ENCODE measurements at regions of chr1 and their contacts with region 1.

Region 1: DNA sequence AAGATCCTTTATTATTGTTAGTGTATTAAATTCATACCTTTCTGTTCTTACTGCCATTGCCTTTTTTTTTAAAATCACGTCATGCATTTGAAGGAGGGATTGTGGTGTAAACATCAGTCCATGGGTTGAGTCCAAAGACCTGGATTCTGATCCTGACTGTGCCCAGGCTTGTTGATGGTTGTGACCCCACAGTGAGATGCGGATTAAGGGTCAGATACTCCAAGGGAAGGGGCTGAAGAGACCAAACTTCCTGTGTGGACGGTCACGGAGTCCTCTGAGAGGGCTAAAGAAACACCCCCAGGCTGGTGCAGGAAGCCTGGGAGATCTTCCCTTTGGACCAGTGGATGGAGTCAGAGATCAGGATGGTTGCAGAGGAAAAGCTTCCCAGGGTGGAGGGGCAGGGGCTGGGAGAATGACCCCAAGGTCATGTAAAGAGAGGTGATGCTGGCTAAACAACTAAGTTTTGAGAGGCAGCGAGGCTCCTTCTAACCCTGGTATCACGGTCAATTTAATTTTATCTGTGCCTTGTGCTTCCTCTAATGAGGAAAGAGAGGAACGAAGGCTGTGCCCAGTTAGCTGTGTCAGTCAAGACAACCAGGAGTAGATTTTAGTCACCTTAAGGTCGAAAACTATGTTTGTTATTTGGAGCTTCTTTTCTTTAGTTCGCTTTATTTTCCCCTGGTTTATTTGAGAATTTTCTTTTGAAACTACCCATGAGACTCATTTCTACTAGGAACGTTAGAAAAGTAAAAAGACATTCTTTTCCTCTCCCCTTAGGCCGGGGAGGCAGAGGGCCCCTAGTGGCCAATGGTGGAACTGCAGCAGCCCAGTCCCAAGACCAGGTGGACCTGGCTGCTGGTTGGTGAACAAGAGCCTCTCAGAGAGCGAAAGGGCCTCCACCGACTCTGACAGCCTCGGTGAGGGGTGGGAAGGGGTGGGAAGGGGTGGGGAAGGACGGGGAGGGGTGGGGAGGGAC is 8.7 kb upstream of the GPR161 start:
- DNase-seq: peak; percentile 72 to 89 (median 81)
- ATAC-seq: peak; percentile 99
- H3K4me3 ChIP-seq: no peak overlapping the region
- H3K4me3 Mint-ChIP-seq: peak overlapping the region; percentile 42
- H3K27ac ChIP-seq: no peak overlapping the region
- H3K27ac Mint-ChIP-seq: no peak overlapping the region
- H3K4me1 ChIP-seq: no peaks in the 10 kb centered on the region
- H3K4me1 Mint-ChIP-seq: peaks cover 12% of the 10 kb centered on the region
- H3K27me3 ChIP-seq: no peaks in the 10 kb centered on the region
- H3K27me3 Mint-ChIP-seq: no peaks in the 10 kb centered on the region
- CTCF ChIP-seq: peak; percentile 91

Region 2: DNA sequence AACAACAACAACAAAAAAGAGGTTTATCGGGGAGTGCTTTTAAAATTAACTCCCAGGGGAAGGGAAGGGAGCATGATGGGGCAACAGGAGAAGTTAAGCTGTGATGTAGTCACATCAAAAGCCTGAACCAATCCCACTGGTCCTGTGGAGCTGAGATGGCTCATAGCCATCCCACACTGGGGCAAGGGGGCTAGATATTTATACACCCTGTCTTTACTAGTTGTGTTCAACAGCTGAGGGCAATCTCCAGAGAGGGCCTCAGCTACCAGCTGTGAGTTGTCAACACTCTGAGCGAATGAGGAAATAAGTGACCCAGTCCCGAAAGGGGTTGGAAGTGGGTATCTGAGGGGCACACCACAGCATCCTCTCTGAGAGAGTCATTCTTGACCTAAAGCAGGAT is 560.9 kb before region 1 on chr1:
- CTCF ChIA-PET with region 1: no interaction called
- POLR2A ChIA-PET with region 1: no interaction called
- intact Hi-C with region 1: no loop called
- DNase-seq: no peak
- ATAC-seq: no peak
- H3K4me3 ChIP-seq: no peak overlapping the region
- H3K4me3 Mint-ChIP-seq: no peak overlapping the region
- H3K27ac ChIP-seq: no peak overlapping the region
- H3K27ac Mint-ChIP-seq: no peak overlapping the region
- H3K4me1 ChIP-seq: no peaks in the 10 kb centered on the region
- H3K4me1 Mint-ChIP-seq: no peaks in the 10 kb centered on the region
- H3K27me3 ChIP-seq: no peaks in the 10 kb centered on the region
- H3K27me3 Mint-ChIP-seq: peaks cover 3% of the 10 kb centered on the region
- CTCF ChIP-seq: no peak

Region 3: DNA sequence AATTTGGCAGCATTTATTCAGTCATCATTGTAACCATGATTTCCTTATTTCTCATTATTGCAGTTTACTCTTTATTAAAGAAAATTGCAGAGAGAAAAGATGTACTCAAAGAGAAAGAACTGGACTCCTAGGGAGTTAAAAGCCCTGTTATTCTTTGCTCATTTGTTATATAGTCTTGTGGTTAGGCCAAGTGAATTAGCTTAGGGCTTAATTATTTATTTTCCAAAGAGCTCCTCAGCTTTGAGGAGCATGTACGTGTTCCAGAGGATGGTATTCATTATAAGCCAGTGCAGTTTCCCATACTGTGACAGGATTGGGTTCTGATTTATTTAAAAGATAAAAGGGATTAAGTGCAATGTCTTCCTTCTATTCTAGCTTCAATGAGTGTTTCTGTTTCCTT is 95.2 kb before region 1 on chr1:
- CTCF ChIA-PET with region 1: no interaction called
- POLR2A ChIA-PET with region 1: no interaction called
- intact Hi-C with region 1: no loop called
- DNase-seq: no peak
- ATAC-seq: no peak
- H3K4me3 ChIP-seq: no peak overlapping the region
- H3K4me3 Mint-ChIP-seq: no peak overlapping the region
- H3K27ac ChIP-seq: no peak overlapping the region
- H3K27ac Mint-ChIP-seq: no peak overlapping the region
- H3K4me1 ChIP-seq: no peaks in the 10 kb centered on the region
- H3K4me1 Mint-ChIP-seq: peaks cover 11% of the 10 kb centered on the region
- H3K27me3 ChIP-seq: no peaks in the 10 kb centered on the region
- H3K27me3 Mint-ChIP-seq: no peaks in the 10 kb centered on the region
- CTCF ChIP-seq: no peak

Region 4: GRCh38 chr1:168161459-168161858 is 16.0 kb after region 1 on chr1:
- CTCF ChIA-PET with region 1: interaction called, 11 read pairs
- POLR2A ChIA-PET with region 1: no interaction called
- intact Hi-C with region 1: no loop called
- DNase-seq: no peak
- ATAC-seq: no peak
- H3K4me3 ChIP-seq: no peak overlapping the region
- H3K4me3 Mint-ChIP-seq: no peak overlapping the region
- H3K27ac ChIP-seq: no peak overlapping the region
- H3K27ac Mint-ChIP-seq: no peak overlapping the region
- H3K4me1 ChIP-seq: no peaks in the 10 kb centered on the region
- H3K4me1 Mint-ChIP-seq: no peaks in the 10 kb centered on the region
- H3K27me3 ChIP-seq: no peaks in the 10 kb centered on the region
- H3K27me3 Mint-ChIP-seq: peaks cover 24% of the 10 kb centered on the region
- CTCF ChIP-seq: no peak